ENCODE measurements at regions of chr3 and their contacts with region 1.

Region 1: GRCh38 chr3:32947789-32948238 is 3.6 kb upstream of the CCR4 start:
- DNase-seq: peak; percentile 71 to 87 (median 82)
- ATAC-seq: peak; percentile 90
- H3K4me3 ChIP-seq: no peak overlapping the region
- H3K4me3 Mint-ChIP-seq: no peak overlapping the region
- H3K27ac ChIP-seq: no peak overlapping the region
- H3K27ac Mint-ChIP-seq: peak overlapping the region in 1 of 9 donors; percentile 74
- H3K4me1 ChIP-seq: peaks cover 9 to 13% of the 10 kb centered on the region in 2 donors
- H3K4me1 Mint-ChIP-seq: peaks cover 8 to 45% (median 24%) of the 10 kb centered on the region in 7 donors
- H3K27me3 ChIP-seq: no peaks in the 10 kb centered on the region
- H3K27me3 Mint-ChIP-seq: peaks cover 0 to 4% (median 0%) of the 10 kb centered on the region in 5 donors

Region 2: DNA sequence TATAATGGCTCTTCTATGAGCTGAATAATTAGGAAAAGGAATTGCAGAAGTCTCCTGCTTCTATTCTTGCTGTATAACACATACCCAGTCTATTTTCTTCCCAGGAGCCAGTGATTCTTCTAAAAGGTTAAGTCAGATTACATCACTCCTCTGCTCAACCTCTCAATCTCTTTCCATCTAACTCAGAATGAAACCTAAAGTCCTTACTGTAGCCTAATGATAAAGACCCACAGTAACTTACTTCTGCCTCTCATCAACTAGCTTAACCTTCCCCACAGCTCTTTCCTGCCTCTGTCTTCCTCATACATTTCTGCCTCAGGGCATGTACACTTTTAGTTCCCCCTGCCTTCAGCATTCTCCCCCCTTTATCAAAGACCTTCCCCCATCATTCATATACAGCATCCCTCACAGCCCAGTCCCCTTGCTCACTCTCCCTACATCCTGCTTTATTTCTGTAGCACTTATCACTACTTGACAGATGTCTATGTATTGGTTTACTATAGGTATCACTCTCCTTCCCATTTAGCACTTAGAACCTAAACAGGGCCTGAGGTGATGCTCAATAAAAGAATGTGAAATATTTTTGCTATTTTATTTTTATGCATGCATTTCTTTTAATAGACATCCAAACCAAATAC is 416.7 kb before region 1 on chr3:
- CTCF ChIA-PET with region 1: no interaction called
- POLR2A ChIA-PET with region 1: no interaction called
- intact Hi-C with region 1: no loop called
- DNase-seq: no peak
- ATAC-seq: no peak
- H3K4me3 ChIP-seq: no peak overlapping the region
- H3K4me3 Mint-ChIP-seq: no peak overlapping the region
- H3K27ac ChIP-seq: no peak overlapping the region
- H3K27ac Mint-ChIP-seq: peak overlapping the region in 5 of 9 donors; percentile 1 to 43 (median 26)
- H3K4me1 ChIP-seq: no peaks in the 10 kb centered on the region
- H3K4me1 Mint-ChIP-seq: peaks cover 0 to 6% (median 0%) of the 10 kb centered on the region in 7 donors
- H3K27me3 ChIP-seq: no peaks in the 10 kb centered on the region
- H3K27me3 Mint-ChIP-seq: no peaks in the 10 kb centered on the region

Region 3: GRCh38 chr3:33023172-33024136 is 75.6 kb after region 1 on chr3:
- CTCF ChIA-PET with region 1: interaction called, 3 read pairs
- POLR2A ChIA-PET with region 1: no interaction called
- intact Hi-C with region 1: loop called (anchors 1 to 5 kb)
- DNase-seq: peak in 6 of 9 donors; percentile 5 to 34 (median 26)
- ATAC-seq: peak; percentile 76
- H3K4me3 ChIP-seq: no peak overlapping the region
- H3K4me3 Mint-ChIP-seq: peak overlapping the region in 4 of 10 donors; percentile 1 to 37 (median 20)
- H3K27ac ChIP-seq: no peak overlapping the region
- H3K27ac Mint-ChIP-seq: peak overlapping the region in 5 of 9 donors; percentile 13 to 56 (median 44)
- H3K4me1 ChIP-seq: peaks cover 13 to 15% of the 10 kb centered on the region in 2 donors
- H3K4me1 Mint-ChIP-seq: peaks cover 15 to 54% (median 40%) of the 10 kb centered on the region in 7 donors
- H3K27me3 ChIP-seq: no peaks in the 10 kb centered on the region
- H3K27me3 Mint-ChIP-seq: no peaks in the 10 kb centered on the region

Region 4: GRCh38 chr3:33063651-33064051 is 115.8 kb after region 1 on chr3:
- CTCF ChIA-PET with region 1: interaction called, 5 read pairs
- POLR2A ChIA-PET with region 1: interaction called, 3 read pairs
- intact Hi-C with region 1: loop called (anchors 1 kb)
- DNase-seq: peak in 1 of 9 donors; percentile 61
- ATAC-seq: peak; percentile 47
- H3K4me3 ChIP-seq: no peak overlapping the region
- H3K4me3 Mint-ChIP-seq: peak overlapping the region in 9 of 10 donors; percentile 8 to 68 (median 43)
- H3K27ac ChIP-seq: no peak overlapping the region
- H3K27ac Mint-ChIP-seq: peak overlapping the region; percentile 1 to 85 (median 39)
- H3K4me1 ChIP-seq: peaks cover 44 to 55% of the 10 kb centered on the region in 2 donors
- H3K4me1 Mint-ChIP-seq: peaks cover 35 to 55% (median 48%) of the 10 kb centered on the region in 7 donors
- H3K27me3 ChIP-seq: no peaks in the 10 kb centered on the region
- H3K27me3 Mint-ChIP-seq: no peaks in the 10 kb centered on the region

Region 5: GRCh38 chr3:33250712-33251111 is 302.9 kb after region 1 on chr3:
- CTCF ChIA-PET with region 1: no interaction called
- POLR2A ChIA-PET with region 1: no interaction called
- intact Hi-C with region 1: no loop called
- DNase-seq: no peak
- ATAC-seq: no peak
- H3K4me3 ChIP-seq: no peak overlapping the region
- H3K4me3 Mint-ChIP-seq: no peak overlapping the region
- H3K27ac ChIP-seq: no peak overlapping the region
- H3K27ac Mint-ChIP-seq: no peak overlapping the region
- H3K4me1 ChIP-seq: no peaks in the 10 kb centered on the region
- H3K4me1 Mint-ChIP-seq: no peaks in the 10 kb centered on the region
- H3K27me3 ChIP-seq: no peaks in the 10 kb centered on the region
- H3K27me3 Mint-ChIP-seq: peaks cover 10 to 53% (median 14%) of the 10 kb centered on the region in 5 donors

Region 6: DNA sequence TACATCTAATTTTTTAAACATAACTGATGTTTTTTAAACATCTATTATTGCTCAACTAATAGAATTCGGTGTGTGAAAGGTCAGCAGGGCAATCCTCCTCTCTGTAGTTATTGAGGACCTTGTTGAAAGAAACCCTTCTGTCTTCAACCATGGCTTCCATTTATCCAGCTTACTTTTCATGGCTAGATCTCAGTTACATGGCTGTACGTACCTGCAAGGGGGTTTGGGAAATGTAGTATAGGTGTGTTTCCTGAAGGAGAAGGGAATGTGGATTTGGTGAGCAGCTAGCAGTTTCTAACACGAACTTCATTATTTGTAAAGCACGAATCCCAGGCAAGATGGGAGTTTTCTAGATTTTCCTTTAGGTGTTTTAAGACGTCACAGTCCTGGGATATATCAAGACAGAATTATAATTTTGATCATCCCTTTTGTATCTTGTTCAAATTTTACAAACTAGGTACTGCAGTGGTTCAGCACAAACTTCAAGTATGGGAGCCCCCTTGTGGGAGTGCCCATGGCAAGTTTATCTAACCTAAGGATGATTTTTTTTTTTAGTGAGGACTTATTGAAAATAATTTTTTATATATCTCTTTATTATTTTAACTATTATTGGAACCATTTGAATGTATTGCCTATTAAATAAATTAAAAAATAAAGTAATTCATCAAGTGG is 371.0 kb after region 1 on chr3:
- CTCF ChIA-PET with region 1: no interaction called
- POLR2A ChIA-PET with region 1: no interaction called
- intact Hi-C with region 1: loop called in 1 of 2 experiments (anchors 2 kb)
- DNase-seq: no peak
- ATAC-seq: no peak
- H3K4me3 ChIP-seq: no peak overlapping the region
- H3K4me3 Mint-ChIP-seq: no peak overlapping the region
- H3K27ac ChIP-seq: no peak overlapping the region
- H3K27ac Mint-ChIP-seq: no peak overlapping the region
- H3K4me1 ChIP-seq: no peaks in the 10 kb centered on the region
- H3K4me1 Mint-ChIP-seq: peaks cover 0 to 8% (median 3%) of the 10 kb centered on the region in 7 donors
- H3K27me3 ChIP-seq: no peaks in the 10 kb centered on the region
- H3K27me3 Mint-ChIP-seq: peaks cover 19 to 33% (median 28%) of the 10 kb centered on the region in 5 donors

Region 7: DNA sequence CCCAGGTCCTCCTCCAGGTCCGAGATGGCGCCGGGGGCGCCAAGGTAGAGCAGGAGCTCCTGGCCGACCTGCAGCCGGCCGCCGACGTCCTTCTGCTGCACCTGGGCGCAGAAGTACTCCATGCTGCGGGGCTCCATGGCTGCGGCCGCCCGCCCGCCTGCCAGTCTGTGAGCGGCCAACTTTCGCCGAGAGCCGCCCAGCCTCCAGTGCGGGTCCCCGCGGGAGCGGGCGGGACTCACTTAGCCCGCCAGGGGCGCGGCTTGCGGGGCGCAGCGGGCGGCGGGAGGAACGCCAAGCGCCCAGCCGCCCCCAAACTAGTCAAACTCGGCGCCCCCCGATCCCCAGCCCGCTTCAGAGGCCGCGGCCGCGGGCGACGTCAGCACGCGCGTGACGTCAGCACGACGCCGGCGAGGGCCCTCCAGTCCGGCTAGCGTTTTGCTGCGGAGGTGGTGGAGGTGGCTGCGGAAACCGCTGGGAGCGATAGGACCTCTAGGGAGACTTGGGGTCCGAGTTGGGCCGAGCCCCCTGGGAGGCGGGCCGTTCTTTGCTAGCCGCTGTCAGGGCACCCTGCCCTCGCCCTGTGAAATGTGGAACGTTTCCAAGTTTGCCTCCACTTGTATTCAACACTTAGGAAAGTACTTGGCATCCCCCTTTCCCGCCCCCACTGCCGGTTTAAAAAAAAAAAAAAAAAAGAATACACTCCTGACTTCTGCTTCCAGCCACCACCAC is 770.2 kb after region 1 on chr3 and contains the start of gene CLASP2:
- CTCF ChIA-PET with region 1: no interaction called
- POLR2A ChIA-PET with region 1: no interaction called
- intact Hi-C with region 1: loop called in 1 of 2 experiments (anchors 5 kb)
- DNase-seq: peak; percentile 77 to 89 (median 86)
- ATAC-seq: peak; percentile 90
- H3K4me3 ChIP-seq: peak within 1 kb of the TSS; percentile 81
- H3K4me3 Mint-ChIP-seq: peak within 1 kb of the TSS in 5 of 10 donors; percentile 89 to 99 (median 97)
- H3K27ac ChIP-seq: peak within 1 kb of the TSS; percentile 91
- H3K27ac Mint-ChIP-seq: peak within 1 kb of the TSS in 7 of 9 donors; percentile 90 to 100 (median 97)
- H3K4me1 ChIP-seq: peaks cover 11 to 17% of the 10 kb centered on the region in 2 donors
- H3K4me1 Mint-ChIP-seq: peaks cover 0 to 17% (median 11%) of the 10 kb centered on the region in 7 donors
- H3K27me3 ChIP-seq: no peaks in the 10 kb centered on the region
- H3K27me3 Mint-ChIP-seq: peaks cover 0 to 10% (median 0%) of the 10 kb centered on the region in 5 donors
- total RNA-seq, gene CLASP2: 44.2 to 83.8 (median 79.2) TPM

Measured in naive thymus-derived CD4-positive, alpha-beta T cell (primary cell).